Left cardiac atrium (tissue), 4 donors: ENCODE measurements at regions of chr4 and their contacts with region 1.

Region 1: GRCh38 chr4:17817020-17817419 is 6.2 kb downstream of the NCAPG start:
- DNase-seq: no peak
- ATAC-seq: peak in 1 of 2 donors; percentile 58

Region 2: DNA sequence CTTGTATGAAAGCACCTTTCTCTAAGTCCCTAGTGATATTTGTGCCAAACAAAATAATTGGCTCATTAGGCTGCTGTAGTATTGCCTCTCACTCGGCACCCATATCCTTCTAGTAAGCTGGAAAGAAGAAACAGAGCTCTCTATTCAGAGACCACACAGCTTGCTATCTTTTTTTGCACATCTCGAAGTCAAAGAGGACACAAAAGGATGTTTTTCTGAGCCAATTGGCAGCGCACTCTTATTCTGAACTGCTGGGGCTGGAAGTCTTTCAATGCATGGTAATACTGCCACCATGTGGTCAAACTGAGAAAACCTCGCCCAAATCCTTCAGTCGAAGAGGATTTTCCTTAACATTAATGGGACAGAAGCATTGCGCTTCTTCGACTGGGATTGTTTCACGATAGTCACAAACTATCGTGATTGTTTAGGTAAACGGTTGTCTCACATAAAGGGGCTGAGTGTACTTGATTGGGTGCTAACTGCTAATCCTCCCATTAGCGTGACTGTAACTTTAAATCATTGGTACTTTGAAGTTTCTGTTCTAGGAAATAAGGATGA is 776.5 kb after region 1 on chr4:
- intact Hi-C with region 1: loop called (anchors 5 to 10 kb)
- DNase-seq: peak; percentile 24
- ATAC-seq: peak; percentile 34 to 53